ENCODE measurements at regions of chr2 and their contacts with region 1.

Region 1: GRCh38 chr2:157192445-157193423 is 64.8 kb upstream of the GALNT5 start:
- DNase-seq: no peak
- ATAC-seq: no peak

Region 2: DNA sequence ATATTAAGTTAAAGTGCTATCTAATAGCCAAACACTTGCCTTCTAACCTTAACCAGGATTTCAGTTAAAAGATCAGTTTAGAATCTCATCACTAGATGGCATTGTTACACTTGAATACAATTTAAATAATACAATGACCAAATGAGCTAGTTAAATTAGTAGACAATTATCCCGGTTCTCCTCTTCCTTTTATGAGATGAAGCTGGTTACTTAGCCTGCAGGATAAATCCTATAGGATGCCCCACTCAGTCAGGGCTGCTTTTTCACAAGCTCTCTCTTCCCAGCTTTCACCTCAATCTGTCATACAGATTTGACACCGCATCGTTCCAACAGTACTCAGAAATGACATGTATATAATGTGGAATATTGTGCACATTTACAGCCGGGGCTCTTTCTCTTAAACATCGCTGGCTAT is 1815.5 kb before region 1 on chr2:
- intact Hi-C with region 1: loop called in 1 of 2 experiments (anchors 2 kb)
- DNase-seq: no peak
- ATAC-seq: no peak

Region 3: DNA sequence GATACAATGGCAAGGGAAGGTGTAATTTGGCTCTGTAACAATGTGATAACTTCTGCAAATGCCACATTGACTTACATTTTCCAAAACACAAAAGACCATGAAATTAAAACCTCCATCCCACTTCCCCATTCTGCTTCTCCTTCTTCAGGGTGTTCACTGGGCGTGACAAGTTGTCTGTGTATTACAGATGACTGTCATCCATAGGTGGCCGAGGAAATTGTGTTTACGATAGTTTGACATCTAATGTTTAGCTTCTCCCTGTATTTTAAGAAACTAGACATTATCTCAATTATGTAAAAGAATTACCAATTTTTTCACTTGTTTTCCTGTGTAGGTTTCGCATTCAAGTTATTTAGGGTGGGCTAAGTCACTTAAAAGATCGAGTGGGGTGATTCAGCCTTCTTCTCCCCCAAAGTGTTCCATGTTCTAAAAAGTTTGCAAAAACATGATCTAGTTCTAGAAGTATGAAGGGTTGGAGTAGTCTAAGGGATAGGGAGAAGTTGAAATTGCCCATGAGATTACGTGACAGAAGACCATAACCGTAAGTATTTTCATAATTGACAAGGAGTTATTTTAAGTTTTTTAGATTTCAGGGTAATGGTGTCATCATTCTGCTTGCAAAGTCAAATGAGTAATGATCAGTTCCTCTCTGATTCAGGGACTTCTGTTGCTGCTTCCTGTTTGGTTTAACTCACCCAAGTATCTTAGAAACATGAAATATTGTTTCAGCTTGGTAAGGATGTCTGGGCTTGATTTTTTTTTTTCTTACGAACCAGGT is 276.4 kb after region 1 on chr2:
- intact Hi-C with region 1: no loop called
- DNase-seq: no peak
- ATAC-seq: peak; percentile 53 to 68